ENCODE measurements at regions of chr6 and their contacts with region 1.

Region 1: GRCh38 chr6:15317934-15318902 is 72.3 kb downstream of the JARID2 start:
- DNase-seq: peak; percentile 58
- ATAC-seq: peak; percentile 56
- H3K4me3 Mint-ChIP-seq: peak overlapping the region; percentile 54
- H3K27ac Mint-ChIP-seq: peak overlapping the region; percentile 82
- H3K4me1 Mint-ChIP-seq: peaks cover 96% of the 10 kb centered on the region
- H3K27me3 Mint-ChIP-seq: no peaks in the 10 kb centered on the region

Region 2: GRCh38 chr6:15305496-15305895 is 12.7 kb before region 1 on chr6:
- CTCF ChIA-PET with region 1: interaction called, 6 read pairs
- POLR2A ChIA-PET with region 1: interaction called, 4 read pairs
- intact Hi-C with region 1: loop called in 1 of 2 experiments (anchors 2 kb)
- DNase-seq: no peak
- ATAC-seq: peak; percentile 45
- H3K4me3 Mint-ChIP-seq: peak overlapping the region; percentile 3
- H3K27ac Mint-ChIP-seq: peak overlapping the region; percentile 84
- H3K4me1 Mint-ChIP-seq: peaks cover 83% of the 10 kb centered on the region
- H3K27me3 Mint-ChIP-seq: no peaks in the 10 kb centered on the region

Measured in activated CD4-positive, alpha-beta T cell treated with anti-CD3 and anti-CD28 coated beads for 36 hours (primary cell).